IMR-90 (cell line): ENCODE measurements at regions of chr6 and their contacts with region 1.

Region 1: DNA sequence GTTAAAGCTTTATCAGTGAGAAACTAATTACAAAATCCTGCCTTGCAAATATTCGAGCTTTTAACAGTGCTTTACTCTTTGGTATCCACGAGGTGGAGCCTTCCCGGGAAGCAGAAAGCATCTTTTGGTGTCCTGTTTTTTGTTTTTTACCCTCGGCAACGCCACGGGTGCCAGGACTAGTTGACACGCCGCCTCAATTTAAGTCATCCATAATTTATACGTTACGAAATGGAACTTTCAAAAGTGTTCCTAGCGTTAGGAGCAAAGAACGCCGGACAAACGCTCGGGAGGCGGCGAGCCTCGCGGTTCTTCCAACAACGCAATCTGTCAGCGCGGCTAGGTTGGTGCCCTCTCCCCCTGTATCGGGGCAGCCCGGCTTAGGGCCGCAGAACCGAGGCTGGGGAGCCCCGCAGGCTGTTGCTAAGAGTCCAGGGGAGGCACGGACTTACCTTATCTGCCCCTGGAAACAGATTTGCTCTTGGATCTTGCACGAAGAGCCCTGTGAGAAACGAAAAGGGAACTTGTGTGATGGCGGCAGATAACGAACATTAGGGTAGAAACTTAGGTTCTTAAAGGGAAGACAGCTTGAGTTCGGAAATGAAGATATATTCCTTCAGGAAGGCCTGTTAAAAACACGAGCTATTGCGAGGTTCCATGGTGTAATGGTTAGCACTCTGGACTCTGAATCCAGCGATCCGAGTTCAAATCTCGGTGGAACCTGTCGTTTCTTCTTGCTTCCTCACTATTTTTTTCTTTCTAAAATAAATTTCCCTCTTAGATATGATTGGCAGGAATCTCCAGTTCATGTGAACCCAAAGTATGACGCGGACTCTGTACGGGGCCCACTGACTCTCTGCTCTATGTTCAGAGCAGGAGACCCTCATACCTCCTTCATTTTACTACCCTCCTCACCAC is 46.2 kb upstream of the ZNF184 start:
- DNase-seq: peak; percentile 90
- ATAC-seq: peak; percentile 87
- H3K4me3 ChIP-seq: peak overlapping the region; percentile 74
- H3K27ac ChIP-seq: peak overlapping the region; percentile 76
- H3K4me1 ChIP-seq: peaks cover 2% of the 10 kb centered on the region; the same call in 1 of the 2 replicates
- H3K27me3 ChIP-seq: peaks cover 2% of the 10 kb centered on the region
- CTCF ChIP-seq: peak; percentile 72
- POLR2A ChIP-seq: no peak
- RAD21 ChIP-seq: peak; percentile 55

Region 2: GRCh38 chr6:27078734-27079357 is 440.3 kb before region 1 on chr6:
- CTCF ChIA-PET with region 1: no interaction called
- POLR2A ChIA-PET with region 1: no interaction called
- dilution Hi-C with region 1: no loop called
- in situ Hi-C with region 1: no loop called
- intact Hi-C with region 1: no loop called
- DNase-seq: peak; percentile 68
- ATAC-seq: peak; percentile 98
- H3K4me3 ChIP-seq: no peak overlapping the region
- H3K27ac ChIP-seq: no peak overlapping the region
- H3K4me1 ChIP-seq: no peaks in the 10 kb centered on the region
- H3K27me3 ChIP-seq: peaks cover 5% of the 10 kb centered on the region
- CTCF ChIP-seq: peak; percentile 73
- POLR2A ChIP-seq: no peak
- RAD21 ChIP-seq: peak; percentile 74

Region 3: GRCh38 chr6:27503436-27504030 is 15.6 kb before region 1 on chr6:
- CTCF ChIA-PET with region 1: interaction called, 5 read pairs
- POLR2A ChIA-PET with region 1: no interaction called
- dilution Hi-C with region 1: no loop called
- in situ Hi-C with region 1: no loop called
- intact Hi-C with region 1: loop called (anchors 2 kb)
- DNase-seq: peak; percentile 78
- ATAC-seq: peak; percentile 53
- H3K4me3 ChIP-seq: peak overlapping the region; percentile 74
- H3K27ac ChIP-seq: no peak overlapping the region
- H3K4me1 ChIP-seq: no peaks in the 10 kb centered on the region
- H3K27me3 ChIP-seq: no peaks in the 10 kb centered on the region
- CTCF ChIP-seq: no peak
- POLR2A ChIP-seq: no peak
- RAD21 ChIP-seq: no peak; the same call in 1 of the 2 replicates

Region 4: GRCh38 chr6:27608916-27609883 is 90.1 kb after region 1 on chr6:
- CTCF ChIA-PET with region 1: no interaction called
- POLR2A ChIA-PET with region 1: no interaction called
- dilution Hi-C with region 1: no loop called
- in situ Hi-C with region 1: no loop called
- intact Hi-C with region 1: loop called (anchors 1 kb)
- DNase-seq: peak; percentile 60
- ATAC-seq: peak; percentile 52; the same call in 1 of the 2 replicates
- H3K4me3 ChIP-seq: no peak overlapping the region
- H3K27ac ChIP-seq: no peak overlapping the region
- H3K4me1 ChIP-seq: no peaks in the 10 kb centered on the region
- H3K27me3 ChIP-seq: no peaks in the 10 kb centered on the region
- CTCF ChIP-seq: peak; percentile 52
- POLR2A ChIP-seq: no peak
- RAD21 ChIP-seq: peak; percentile 45; the same call in 1 of the 2 replicates

Region 5: DNA sequence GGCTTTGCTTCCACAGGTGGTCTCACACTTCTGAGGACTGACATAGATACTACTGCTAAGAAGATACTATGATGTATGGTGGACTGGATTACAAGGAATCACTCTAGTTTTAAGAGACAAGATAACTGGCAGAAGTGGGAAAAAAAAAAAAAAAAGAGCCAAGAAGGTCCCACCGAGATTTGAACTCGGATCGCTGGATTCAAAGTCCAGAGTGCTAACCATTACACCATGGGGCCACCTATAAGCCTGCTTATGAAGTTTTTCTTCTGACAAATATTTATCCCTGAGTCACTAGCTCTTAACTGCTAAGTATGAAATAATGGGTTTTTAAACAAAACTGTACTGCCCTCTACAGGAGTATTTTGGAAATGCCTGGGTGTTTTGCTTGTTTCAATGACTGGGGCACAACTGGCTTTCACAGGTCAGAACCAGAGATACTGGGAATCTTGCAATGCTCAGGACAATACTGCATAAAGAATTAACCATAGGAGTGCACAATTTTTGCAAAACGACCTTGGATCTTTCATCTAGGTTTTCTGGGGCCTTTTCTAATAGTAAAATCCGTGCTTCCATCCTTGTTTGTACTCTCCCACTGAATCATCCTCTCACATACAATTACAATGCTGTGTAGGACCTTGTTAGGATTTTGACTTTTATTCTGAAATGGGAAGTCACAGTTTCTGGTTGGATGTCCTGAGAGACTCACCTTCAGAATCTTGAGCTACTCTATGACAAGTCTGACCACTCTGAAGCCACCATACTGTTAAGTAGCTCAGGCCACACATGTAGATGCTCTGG is 276.8 kb after region 1 on chr6:
- CTCF ChIA-PET with region 1: no interaction called
- POLR2A ChIA-PET with region 1: no interaction called
- dilution Hi-C with region 1: no loop called
- in situ Hi-C with region 1: no loop called
- intact Hi-C with region 1: loop called (anchors 5 kb)
- DNase-seq: peak; percentile 89
- ATAC-seq: peak; percentile 63
- H3K4me3 ChIP-seq: no peak overlapping the region
- H3K27ac ChIP-seq: no peak overlapping the region
- H3K4me1 ChIP-seq: no peaks in the 10 kb centered on the region
- H3K27me3 ChIP-seq: no peaks in the 10 kb centered on the region
- CTCF ChIP-seq: peak; percentile 84
- POLR2A ChIP-seq: no peak
- RAD21 ChIP-seq: peak; percentile 55